MCF 10A (cell line): ENCODE measurements at regions of chr7 and their contacts with region 1.

Region 1: GRCh38 chr7:25028370-25029021 is 48.5 kb upstream of the OSBPL3 start:
- DNase-seq: peak; percentile 38
- H3K4me3 Mint-ChIP-seq: no peak overlapping the region
- H3K27ac Mint-ChIP-seq: peak overlapping the region; percentile 89
- H3K4me1 Mint-ChIP-seq: peaks cover 28% of the 10 kb centered on the region
- H3K27me3 Mint-ChIP-seq: no peaks in the 10 kb centered on the region
- CTCF ChIP-seq: no peak

Region 2: GRCh38 chr7:25009257-25009656 is 19.2 kb before region 1 on chr7:
- CTCF ChIA-PET with region 1: interaction called, 4 read pairs
- POLR2A ChIA-PET with region 1: interaction called, 10 read pairs
- intact Hi-C with region 1: no loop called
- DNase-seq: peak; percentile 90
- H3K4me3 Mint-ChIP-seq: no peak overlapping the region
- H3K27ac Mint-ChIP-seq: no peak overlapping the region
- H3K4me1 Mint-ChIP-seq: peaks cover 14% of the 10 kb centered on the region
- H3K27me3 Mint-ChIP-seq: no peaks in the 10 kb centered on the region
- CTCF ChIP-seq: no peak